B cell (primary cell): ENCODE measurements at regions of chrX and their contacts with region 1.

Region 1: DNA sequence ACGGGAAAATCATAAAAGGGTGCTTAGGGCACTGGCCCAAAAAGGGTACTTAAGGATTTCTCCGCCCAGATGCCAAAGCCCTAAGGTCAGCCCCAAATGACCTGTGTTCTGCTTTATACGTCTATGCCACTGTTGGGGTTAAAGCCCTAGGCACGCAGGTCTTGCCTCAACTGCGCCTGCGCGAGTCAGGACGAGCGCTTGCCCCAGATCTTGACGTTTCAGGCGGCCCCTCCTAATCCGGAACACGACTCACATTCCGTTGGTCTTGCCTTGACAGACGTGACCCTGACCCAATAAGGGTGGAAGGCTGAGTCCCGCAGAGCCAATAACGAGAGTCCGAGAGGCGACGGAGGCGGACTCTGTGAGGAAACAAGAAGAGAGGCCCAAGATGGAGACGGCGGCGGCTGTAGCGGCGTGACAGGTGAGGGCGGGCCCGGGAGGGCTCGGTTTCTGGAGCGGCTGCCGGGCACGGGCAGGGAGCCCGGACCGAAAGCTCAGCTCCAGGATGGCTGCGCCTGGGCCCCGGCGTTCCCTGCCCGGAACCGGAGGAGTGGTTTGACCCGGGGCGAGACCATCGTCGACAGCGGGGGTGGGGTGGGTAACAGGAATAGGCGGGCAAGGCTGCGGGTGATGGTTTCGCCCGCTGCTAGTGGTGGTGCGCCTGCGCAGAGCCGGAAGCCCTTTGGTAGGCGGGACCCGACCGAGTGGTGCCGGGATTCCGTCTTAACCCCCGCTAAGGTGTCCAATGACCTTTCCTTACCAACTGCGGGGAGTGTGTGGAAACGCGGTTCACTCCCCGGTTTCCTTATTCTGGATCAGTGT is at the start of gene ARAF:
- DNase-seq: peak; percentile 97
- ATAC-seq: peak; percentile 85
- H3K4me3 ChIP-seq: peak within 1 kb of the TSS; percentile 55 to 81 (median 75)
- H3K4me3 Mint-ChIP-seq: peak within 1 kb of the TSS; percentile 87
- H3K27ac ChIP-seq: peak within 1 kb of the TSS; percentile 89 to 91
- H3K27ac Mint-ChIP-seq: peak within 1 kb of the TSS; percentile 96
- H3K4me1 ChIP-seq: peaks cover 6 to 29% of the 10 kb centered on the region in 2 donors
- H3K4me1 Mint-ChIP-seq: peaks cover 35% of the 10 kb centered on the region
- H3K27me3 ChIP-seq: no peaks in the 10 kb centered on the region
- H3K27me3 Mint-ChIP-seq: no peaks in the 10 kb centered on the region
- CTCF ChIP-seq: no peak
- total RNA-seq, gene ARAF: 103 and 127 TPM in 2 replicates

Region 2: DNA sequence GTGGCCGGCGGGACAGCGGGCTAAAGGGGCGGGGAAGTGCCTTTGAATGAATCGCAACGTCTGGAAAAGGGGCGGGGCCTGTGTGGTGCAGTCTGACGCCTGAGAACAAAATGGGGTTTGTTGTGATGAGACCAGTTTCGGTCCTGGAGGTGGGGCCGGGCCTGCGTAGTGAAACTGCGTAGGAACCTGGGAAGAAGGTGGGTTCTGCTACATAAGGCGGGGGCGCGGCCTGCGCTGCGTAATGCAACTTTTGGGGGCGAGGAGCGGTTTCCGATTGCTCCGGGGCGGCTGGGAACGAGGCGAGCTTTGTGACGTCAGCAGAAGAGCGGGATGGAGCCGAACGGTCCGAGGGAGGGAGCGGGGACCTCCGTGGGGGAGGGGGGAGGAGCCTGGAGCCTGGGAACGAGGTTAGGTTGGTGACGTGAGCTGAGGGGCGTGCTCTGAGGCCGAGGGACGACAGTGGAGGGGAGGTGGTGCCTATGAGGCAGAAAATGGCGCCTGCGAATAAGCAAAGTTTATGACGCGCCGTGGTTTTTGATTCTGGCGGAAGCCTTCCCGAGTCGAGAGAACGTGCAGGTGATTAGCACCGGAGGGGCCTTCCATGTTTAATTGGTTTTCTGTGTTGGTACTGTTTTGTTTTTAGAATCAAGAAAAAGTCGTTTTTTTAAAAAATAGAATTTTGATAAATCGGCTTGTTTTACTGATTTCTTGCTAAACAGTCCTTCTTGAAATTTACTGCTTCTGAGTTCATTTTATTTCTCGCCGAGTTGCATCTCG is 327.5 kb before region 1 on chrX:
- CTCF ChIA-PET with region 1: no interaction called
- POLR2A ChIA-PET with region 1: interaction called, 4 read pairs
- intact Hi-C with region 1: loop called (anchors 2 kb)
- DNase-seq: peak; percentile 96
- ATAC-seq: peak; percentile 88
- H3K4me3 ChIP-seq: peak overlapping the region; percentile 67 to 82 (median 75)
- H3K4me3 Mint-ChIP-seq: peak overlapping the region; percentile 94
- H3K27ac ChIP-seq: peak overlapping the region; percentile 96 to 99
- H3K27ac Mint-ChIP-seq: peak overlapping the region; percentile 99
- H3K4me1 ChIP-seq: peaks cover 0 to 8% of the 10 kb centered on the region in 2 donors
- H3K4me1 Mint-ChIP-seq: peaks cover 21% of the 10 kb centered on the region
- H3K27me3 ChIP-seq: no peaks in the 10 kb centered on the region
- H3K27me3 Mint-ChIP-seq: no peaks in the 10 kb centered on the region
- CTCF ChIP-seq: no peak

Region 3: DNA sequence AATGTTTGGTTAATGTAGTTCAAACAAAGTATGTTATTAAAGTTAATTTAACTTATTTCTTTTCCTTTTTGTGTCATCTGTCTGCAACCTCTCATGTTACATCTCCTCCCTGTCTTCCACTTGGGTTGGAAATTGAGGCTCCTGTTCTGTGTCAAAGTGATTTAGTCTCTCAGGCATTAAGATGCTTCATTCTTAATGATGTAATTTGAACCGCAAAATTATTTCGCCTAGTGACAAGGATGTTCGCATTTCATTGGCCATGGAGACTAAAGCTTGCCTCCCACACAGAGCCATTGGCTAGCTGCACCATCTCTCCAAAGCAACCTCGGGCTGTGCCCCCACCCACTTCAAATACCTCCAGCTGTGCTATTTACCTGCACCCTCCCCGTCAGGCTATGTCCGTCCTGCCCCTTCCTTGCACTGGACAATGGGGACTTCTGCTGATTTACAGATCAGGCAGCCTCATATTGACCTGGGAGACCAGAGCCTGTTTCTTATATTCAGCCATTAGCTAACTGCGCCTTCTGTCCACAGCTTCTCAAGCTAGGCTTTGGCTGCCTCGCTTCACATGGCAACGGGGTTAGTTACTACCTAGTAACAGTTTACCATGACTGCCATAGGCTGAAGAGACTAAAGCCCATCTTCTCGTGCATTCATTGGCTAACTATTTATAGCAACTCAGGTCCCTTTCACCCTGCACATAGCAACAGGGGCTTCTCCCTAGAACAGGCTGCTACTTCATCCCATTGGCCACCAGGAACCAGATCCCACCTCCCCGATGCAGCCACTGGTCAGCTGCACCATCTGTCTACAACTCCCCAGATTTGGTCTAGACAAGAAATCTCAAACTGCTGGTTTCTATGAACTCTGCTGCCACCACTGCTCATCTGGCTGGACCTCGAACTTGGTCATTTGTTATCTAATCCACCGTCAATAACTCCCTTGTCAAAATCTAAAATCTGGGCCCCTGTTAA is 199.2 kb before region 1 on chrX:
- CTCF ChIA-PET with region 1: no interaction called
- POLR2A ChIA-PET with region 1: no interaction called
- intact Hi-C with region 1: loop called (anchors 1 kb)
- DNase-seq: peak; percentile 90
- ATAC-seq: peak; percentile 77
- H3K4me3 ChIP-seq: peak overlapping the region; percentile 39 to 63 (median 55)
- H3K4me3 Mint-ChIP-seq: peak overlapping the region; percentile 90
- H3K27ac ChIP-seq: peak overlapping the region; percentile 86 to 92
- H3K27ac Mint-ChIP-seq: peak overlapping the region; percentile 90
- H3K4me1 ChIP-seq: peaks cover 17 to 29% of the 10 kb centered on the region in 2 donors
- H3K4me1 Mint-ChIP-seq: peaks cover 34% of the 10 kb centered on the region
- H3K27me3 ChIP-seq: no peaks in the 10 kb centered on the region
- H3K27me3 Mint-ChIP-seq: no peaks in the 10 kb centered on the region
- CTCF ChIP-seq: no peak

Region 4: GRCh38 chrX:47608130-47608810 is 47.2 kb after region 1 on chrX:
- CTCF ChIA-PET with region 1: no interaction called
- POLR2A ChIA-PET with region 1: no interaction called
- intact Hi-C with region 1: no loop called
- DNase-seq: no peak
- ATAC-seq: no peak
- H3K4me3 ChIP-seq: no peak overlapping the region
- H3K4me3 Mint-ChIP-seq: no peak overlapping the region
- H3K27ac ChIP-seq: no peak overlapping the region
- H3K27ac Mint-ChIP-seq: no peak overlapping the region
- H3K4me1 ChIP-seq: no peaks in the 10 kb centered on the region
- H3K4me1 Mint-ChIP-seq: no peaks in the 10 kb centered on the region
- H3K27me3 ChIP-seq: no peaks in the 10 kb centered on the region
- H3K27me3 Mint-ChIP-seq: peaks cover 3% of the 10 kb centered on the region
- CTCF ChIP-seq: no peak

Region 5: DNA sequence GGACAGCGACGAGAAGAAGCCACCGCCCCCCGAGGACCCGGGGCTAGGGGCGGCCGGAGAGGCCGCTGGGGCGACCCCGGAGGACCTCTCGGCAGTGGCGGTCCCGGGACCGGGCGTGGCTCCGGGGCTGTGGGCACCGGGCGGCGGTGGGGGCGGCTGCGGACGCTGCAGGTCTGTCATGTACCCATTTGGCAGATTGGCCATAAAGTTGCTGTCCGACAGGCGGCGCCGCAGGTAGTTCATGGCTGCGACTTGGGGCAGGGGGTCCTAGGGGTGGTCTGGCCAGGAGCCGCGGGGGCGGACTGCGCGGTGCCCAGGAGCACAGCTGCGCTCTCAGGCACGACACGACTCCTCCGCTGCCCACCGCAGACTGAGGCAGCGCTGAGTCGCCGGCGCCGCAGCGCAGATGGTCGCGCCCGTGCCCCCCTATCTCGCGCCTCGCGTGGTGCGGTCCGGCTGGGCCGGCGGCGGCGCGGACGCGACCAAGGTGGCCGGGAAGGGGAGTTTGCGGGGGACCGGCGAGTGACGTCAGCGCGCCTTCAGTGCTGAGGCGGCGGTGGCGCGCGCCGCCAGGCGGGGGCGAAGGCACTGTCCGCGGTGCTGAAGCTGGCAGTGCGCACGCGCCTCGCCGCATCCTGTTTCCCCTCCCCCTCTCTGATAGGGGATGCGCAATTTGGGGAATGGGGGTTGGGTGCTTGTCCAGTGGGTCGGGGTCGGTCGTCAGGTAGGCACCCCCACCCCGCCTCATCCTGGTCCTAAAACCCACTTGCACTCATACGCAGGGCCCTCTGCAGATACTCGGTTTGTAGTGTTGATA is 58.7 kb after region 1 on chrX and contains the start of gene SYN1:
- CTCF ChIA-PET with region 1: no interaction called
- POLR2A ChIA-PET with region 1: no interaction called
- intact Hi-C with region 1: loop called (anchors 1 kb)
- DNase-seq: peak; percentile 86
- ATAC-seq: peak; percentile 95
- H3K4me3 ChIP-seq: peak within 1 kb of the TSS in 3 of 5 experiments; percentile 35 to 47 (median 44)
- H3K4me3 Mint-ChIP-seq: peak within 1 kb of the TSS; percentile 74
- H3K27ac ChIP-seq: no peak within 1 kb of the TSS
- H3K27ac Mint-ChIP-seq: peak within 1 kb of the TSS; percentile 6
- H3K4me1 ChIP-seq: peaks cover 4 to 15% of the 10 kb centered on the region in 2 donors
- H3K4me1 Mint-ChIP-seq: peaks cover 14% of the 10 kb centered on the region
- H3K27me3 ChIP-seq: peaks cover 0 to 29% (median 2%) of the 10 kb centered on the region in 4 experiments
- H3K27me3 Mint-ChIP-seq: peaks cover 42% of the 10 kb centered on the region
- CTCF ChIP-seq: peak; percentile 6
- total RNA-seq, gene SYN1: not detected in 2 replicates

Region 6: DNA sequence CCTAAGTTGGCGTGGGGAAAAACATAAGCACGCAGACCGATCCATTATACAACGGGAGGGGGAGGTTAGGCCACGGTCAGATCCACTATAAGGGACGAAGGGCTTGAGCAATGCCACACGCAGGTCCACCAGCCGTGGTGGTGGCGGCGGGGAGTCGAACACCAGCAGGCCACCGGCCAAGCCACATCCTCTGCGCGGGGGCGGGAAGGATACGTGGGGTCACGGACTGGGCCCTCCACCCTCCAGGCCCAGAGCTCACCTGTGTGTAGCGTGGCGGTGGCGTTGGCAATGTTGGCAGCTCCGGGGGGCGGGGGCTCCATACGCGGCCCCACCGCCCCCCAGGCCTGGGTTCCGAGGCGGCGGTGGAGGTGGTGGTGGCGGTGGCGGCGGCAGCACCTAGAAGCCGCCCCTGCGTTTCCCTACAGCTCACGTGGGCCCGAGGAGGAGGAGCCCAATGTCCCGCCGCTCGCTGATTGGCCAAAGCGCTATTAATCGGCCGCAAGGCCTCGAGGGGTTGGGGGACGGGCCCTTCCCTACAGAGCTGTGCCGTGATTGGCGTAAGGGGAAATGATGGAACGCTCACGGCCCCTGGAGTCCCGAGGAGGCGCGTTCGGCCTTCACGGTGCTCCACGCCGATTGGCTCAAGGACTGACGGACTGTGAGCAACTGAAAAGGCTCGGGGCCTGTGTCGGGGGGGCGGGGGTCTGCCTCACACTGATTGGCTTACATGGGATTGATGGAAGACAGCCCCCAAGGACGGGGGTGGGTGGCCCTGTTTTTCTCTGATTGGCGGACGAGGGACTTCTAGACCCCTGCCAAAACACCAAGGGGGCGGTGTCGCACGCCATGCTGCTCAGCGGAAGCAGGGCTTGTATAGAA is 89.4 kb after region 1 on chrX and contains the start of gene ELK1:
- CTCF ChIA-PET with region 1: no interaction called
- POLR2A ChIA-PET with region 1: no interaction called
- intact Hi-C with region 1: loop called (anchors 1 kb)
- DNase-seq: peak; percentile 94
- ATAC-seq: peak; percentile 91
- H3K4me3 ChIP-seq: peak within 1 kb of the TSS in 4 of 5 experiments; percentile 68 to 77 (median 75)
- H3K4me3 Mint-ChIP-seq: peak within 1 kb of the TSS; percentile 93
- H3K27ac ChIP-seq: peak within 1 kb of the TSS; percentile 69 to 73
- H3K27ac Mint-ChIP-seq: peak within 1 kb of the TSS; percentile 94
- H3K4me1 ChIP-seq: peaks cover 11 to 26% of the 10 kb centered on the region in 2 donors
- H3K4me1 Mint-ChIP-seq: peaks cover 29% of the 10 kb centered on the region
- H3K27me3 ChIP-seq: no peaks in the 10 kb centered on the region
- H3K27me3 Mint-ChIP-seq: no peaks in the 10 kb centered on the region
- CTCF ChIP-seq: no peak
- total RNA-seq, gene ELK1: 20.8 and 22.7 TPM in 2 replicates

Region 7: GRCh38 chrX:47658684-47659515 is 97.9 kb after region 1 on chrX and contains the start of gene UXT:
- CTCF ChIA-PET with region 1: no interaction called
- POLR2A ChIA-PET with region 1: no interaction called
- intact Hi-C with region 1: loop called (anchors 2 kb)
- DNase-seq: peak; percentile 94
- ATAC-seq: peak; percentile 82
- H3K4me3 ChIP-seq: peak within 1 kb of the TSS; percentile 53 to 80 (median 71)
- H3K4me3 Mint-ChIP-seq: peak within 1 kb of the TSS; percentile 95
- H3K27ac ChIP-seq: peak within 1 kb of the TSS; percentile 98
- H3K27ac Mint-ChIP-seq: peak within 1 kb of the TSS; percentile 100
- H3K4me1 ChIP-seq: peaks cover 10 to 16% of the 10 kb centered on the region in 2 donors
- H3K4me1 Mint-ChIP-seq: peaks cover 16% of the 10 kb centered on the region
- H3K27me3 ChIP-seq: no peaks in the 10 kb centered on the region
- H3K27me3 Mint-ChIP-seq: no peaks in the 10 kb centered on the region
- CTCF ChIP-seq: no peak
- total RNA-seq, gene UXT: 177 and 183 TPM in 2 replicates

Region 8: GRCh38 chrX:47743504-47743903 is 182.5 kb after region 1 on chrX:
- CTCF ChIA-PET with region 1: no interaction called
- POLR2A ChIA-PET with region 1: no interaction called
- intact Hi-C with region 1: no loop called
- DNase-seq: no peak
- ATAC-seq: no peak
- H3K4me3 ChIP-seq: no peak overlapping the region
- H3K4me3 Mint-ChIP-seq: no peak overlapping the region
- H3K27ac ChIP-seq: no peak overlapping the region
- H3K27ac Mint-ChIP-seq: no peak overlapping the region
- H3K4me1 ChIP-seq: no peaks in the 10 kb centered on the region
- H3K4me1 Mint-ChIP-seq: no peaks in the 10 kb centered on the region
- H3K27me3 ChIP-seq: no peaks in the 10 kb centered on the region
- H3K27me3 Mint-ChIP-seq: peaks cover 17% of the 10 kb centered on the region
- CTCF ChIP-seq: no peak